Activated CD4-positive, alpha-beta T cell treated with anti-CD3 and anti-CD28 coated beads for 36 hours (primary cell): ENCODE measurements at regions of chr2 and their contacts with region 1.

Region 1: GRCh38 chr2:69674316-69674670 is 30.8 kb upstream of the AAK1 start:
- DNase-seq: no peak
- ATAC-seq: no peak
- H3K4me3 Mint-ChIP-seq: no peak overlapping the region
- H3K27ac Mint-ChIP-seq: peak overlapping the region; percentile 13
- H3K4me1 Mint-ChIP-seq: peaks cover 32% of the 10 kb centered on the region
- H3K27me3 Mint-ChIP-seq: no peaks in the 10 kb centered on the region

Region 2: DNA sequence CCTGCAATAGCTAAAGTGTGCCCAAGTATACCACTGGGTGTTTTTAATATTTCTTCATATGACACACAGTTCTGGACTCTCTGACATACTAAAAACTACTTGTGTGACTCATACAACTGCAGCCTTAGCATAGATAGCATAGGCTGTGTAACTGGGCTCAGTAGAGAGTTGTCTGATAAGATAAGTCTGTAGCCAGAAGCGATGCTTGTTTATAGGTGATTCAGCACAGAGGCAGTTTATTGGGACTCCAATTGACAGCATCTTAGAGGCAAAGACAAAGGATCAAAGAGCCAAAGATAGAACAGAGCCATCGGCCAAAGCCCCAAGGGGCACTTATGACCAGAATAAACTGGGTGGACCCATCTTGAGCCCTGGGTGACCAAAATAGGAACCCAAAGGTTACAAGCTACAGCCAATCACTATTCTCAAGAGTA is 73.1 kb before region 1 on chr2:
- CTCF ChIA-PET with region 1: no interaction called
- POLR2A ChIA-PET with region 1: no interaction called
- intact Hi-C with region 1: loop called in 1 of 2 experiments (anchors 1 kb)
- DNase-seq: no peak
- ATAC-seq: peak; percentile 93
- H3K4me3 Mint-ChIP-seq: no peak overlapping the region
- H3K27ac Mint-ChIP-seq: peak overlapping the region; percentile 82
- H3K4me1 Mint-ChIP-seq: peaks cover 93% of the 10 kb centered on the region
- H3K27me3 Mint-ChIP-seq: no peaks in the 10 kb centered on the region

Region 3: GRCh38 chr2:69689466-69689865 is 15.2 kb after region 1 on chr2:
- CTCF ChIA-PET with region 1: interaction called, 3 read pairs
- POLR2A ChIA-PET with region 1: interaction called, 3 read pairs
- intact Hi-C with region 1: loop called (anchors 2 kb)
- DNase-seq: no peak
- ATAC-seq: no peak
- H3K4me3 Mint-ChIP-seq: peak overlapping the region; percentile 25
- H3K27ac Mint-ChIP-seq: peak overlapping the region; percentile 81
- H3K4me1 Mint-ChIP-seq: peaks cover 77% of the 10 kb centered on the region
- H3K27me3 Mint-ChIP-seq: no peaks in the 10 kb centered on the region

Region 4: GRCh38 chr2:69694894-69695849 is 20.9 kb after region 1 on chr2:
- CTCF ChIA-PET with region 1: interaction called, 3 read pairs
- POLR2A ChIA-PET with region 1: interaction called, 3 read pairs
- intact Hi-C with region 1: loop called in 1 of 2 experiments (anchors 2 kb)
- DNase-seq: no peak
- ATAC-seq: peak; percentile 69
- H3K4me3 Mint-ChIP-seq: peak overlapping the region; percentile 7
- H3K27ac Mint-ChIP-seq: peak overlapping the region; percentile 1
- H3K4me1 Mint-ChIP-seq: peaks cover 90% of the 10 kb centered on the region
- H3K27me3 Mint-ChIP-seq: no peaks in the 10 kb centered on the region

Region 5: DNA sequence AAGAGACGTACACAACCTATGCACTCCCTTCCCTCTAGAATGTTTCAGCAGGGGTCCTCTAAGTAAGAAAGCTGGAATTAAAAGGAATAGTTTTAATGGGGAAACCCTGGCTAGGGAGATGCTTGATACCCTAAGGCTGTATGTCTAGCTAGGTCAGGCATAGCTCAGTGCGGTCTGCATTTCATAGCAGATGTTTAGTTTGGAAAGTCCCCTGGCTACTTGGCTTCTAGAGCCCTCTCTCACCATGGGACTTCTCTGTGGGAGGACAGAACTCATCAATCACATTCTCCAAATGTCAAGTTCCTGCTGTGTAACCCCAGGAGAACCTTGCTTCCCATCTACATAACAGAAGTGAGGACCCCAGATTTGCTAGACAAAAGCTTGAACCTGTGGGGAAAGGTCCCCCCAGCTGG is 43.6 kb after region 1 on chr2:
- CTCF ChIA-PET with region 1: no interaction called
- POLR2A ChIA-PET with region 1: no interaction called
- intact Hi-C with region 1: loop called in 1 of 2 experiments (anchors 2 kb)
- DNase-seq: no peak
- ATAC-seq: no peak
- H3K4me3 Mint-ChIP-seq: no peak overlapping the region
- H3K27ac Mint-ChIP-seq: no peak overlapping the region
- H3K4me1 Mint-ChIP-seq: peaks cover 15% of the 10 kb centered on the region
- H3K27me3 Mint-ChIP-seq: no peaks in the 10 kb centered on the region

Region 6: DNA sequence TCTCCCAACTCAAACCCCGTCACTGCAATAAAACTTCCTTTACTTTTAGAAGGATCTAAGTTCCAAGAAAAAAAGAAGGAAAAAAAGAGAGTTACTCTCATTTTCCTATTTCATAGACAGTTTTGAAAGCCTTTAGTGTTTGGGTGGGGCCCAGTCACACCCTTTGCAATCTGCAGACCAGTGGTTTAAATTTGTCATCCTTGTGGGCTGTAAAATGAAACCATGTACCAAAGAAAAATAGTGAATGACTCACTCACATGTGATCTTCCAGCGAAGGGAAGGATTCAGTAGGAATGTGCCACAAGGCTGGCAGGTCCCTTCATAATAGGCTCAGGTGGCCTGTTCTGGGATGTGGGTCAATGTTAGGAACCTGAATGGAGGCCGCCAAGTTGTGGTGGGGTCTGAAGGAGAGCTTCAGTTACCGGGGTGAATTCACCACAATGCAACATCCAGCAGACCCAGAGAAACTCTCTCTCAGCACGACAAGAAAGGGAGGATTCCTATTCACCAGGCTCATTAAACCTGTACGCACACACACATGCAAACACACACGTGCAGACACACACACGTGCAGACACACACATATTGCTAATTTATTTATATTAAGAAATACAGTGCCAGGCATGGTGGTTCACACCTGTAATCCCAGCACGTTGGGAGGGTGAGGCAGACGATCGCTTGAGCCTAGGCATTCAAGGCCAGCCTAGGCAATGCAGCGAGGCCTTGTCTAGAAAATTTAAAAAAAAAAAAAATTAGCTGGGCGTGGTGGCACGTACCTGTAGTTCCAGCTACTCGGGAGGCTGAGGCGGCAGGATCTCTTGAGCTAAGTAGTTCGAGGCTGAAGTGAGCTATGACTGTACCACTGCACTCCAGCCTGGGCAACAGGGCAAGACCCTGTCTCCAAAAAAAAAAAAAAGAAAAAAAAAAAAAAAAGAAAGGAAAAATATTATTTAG is 96.2 kb after region 1 on chr2:
- CTCF ChIA-PET with region 1: no interaction called
- POLR2A ChIA-PET with region 1: no interaction called
- intact Hi-C with region 1: loop called in 1 of 2 experiments (anchors 5 kb)
- DNase-seq: peak; percentile 37
- ATAC-seq: peak; percentile 28
- H3K4me3 Mint-ChIP-seq: no peak overlapping the region
- H3K27ac Mint-ChIP-seq: peak overlapping the region; percentile 38
- H3K4me1 Mint-ChIP-seq: peaks cover 49% of the 10 kb centered on the region
- H3K27me3 Mint-ChIP-seq: no peaks in the 10 kb centered on the region

Region 7: DNA sequence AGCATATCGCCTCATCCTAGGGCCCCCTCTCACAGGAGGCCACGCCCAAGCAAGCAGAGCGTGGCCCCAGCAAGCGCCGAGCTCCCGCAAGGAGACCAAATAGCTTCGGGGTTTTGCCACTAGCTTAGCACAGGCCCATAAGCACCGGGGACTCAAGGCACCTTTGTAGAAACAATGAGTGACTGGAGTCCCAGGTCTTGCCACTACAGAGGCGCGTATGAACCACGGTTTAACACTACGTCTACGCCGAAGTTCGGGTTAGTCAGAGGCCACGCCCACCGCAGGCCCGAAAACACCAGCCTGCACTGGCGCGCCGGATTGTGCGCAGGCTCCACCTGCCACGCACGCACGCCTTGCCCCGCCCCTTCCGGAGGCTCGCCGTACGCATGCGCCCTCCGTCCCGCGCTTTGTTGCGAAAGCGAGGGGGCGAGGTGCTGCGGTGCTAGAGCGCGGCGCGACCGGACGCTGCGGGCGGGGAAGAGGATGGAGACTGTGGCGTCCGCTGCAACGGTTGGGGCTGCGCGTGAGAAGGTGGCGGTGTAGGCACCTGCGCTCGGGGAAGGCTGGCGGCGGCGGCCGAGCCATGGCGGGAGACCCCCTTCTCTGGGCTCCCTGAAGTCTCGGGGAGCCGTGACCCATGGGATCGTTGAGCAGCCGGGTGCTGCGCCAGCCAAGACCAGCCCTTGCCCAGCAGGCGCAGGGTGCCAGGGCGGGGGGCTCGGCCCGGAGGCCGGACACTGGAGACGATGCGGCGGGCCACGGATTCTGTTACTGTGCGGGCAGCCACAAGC is 155.2 kb after region 1 on chr2 and contains the start of gene GMCL1:
- CTCF ChIA-PET with region 1: no interaction called
- POLR2A ChIA-PET with region 1: no interaction called
- intact Hi-C with region 1: no loop called
- DNase-seq: peak; percentile 99
- ATAC-seq: peak; percentile 96
- H3K4me3 Mint-ChIP-seq: peak within 1 kb of the TSS; percentile 83
- H3K27ac Mint-ChIP-seq: peak within 1 kb of the TSS; percentile 94
- H3K4me1 Mint-ChIP-seq: peaks cover 49% of the 10 kb centered on the region
- H3K27me3 Mint-ChIP-seq: no peaks in the 10 kb centered on the region
- total RNA-seq, gene GMCL1: 14.5 to 20.3 TPM